ENCODE measurements at regions of chr10 and their contacts with region 1.

Region 1: GRCh38 chr10:132003282-132003924 is 21.7 kb upstream of the BNIP3 start:
- DNase-seq: no peak
- H3K4me3 ChIP-seq: no peak overlapping the region
- H3K27ac ChIP-seq: no peak overlapping the region
- H3K4me1 ChIP-seq: peaks cover 10% of the 10 kb centered on the region
- H3K27me3 ChIP-seq: no peaks in the 10 kb centered on the region
- CTCF ChIP-seq: no peak
- POLR2A ChIP-seq: no peak

Region 2: DNA sequence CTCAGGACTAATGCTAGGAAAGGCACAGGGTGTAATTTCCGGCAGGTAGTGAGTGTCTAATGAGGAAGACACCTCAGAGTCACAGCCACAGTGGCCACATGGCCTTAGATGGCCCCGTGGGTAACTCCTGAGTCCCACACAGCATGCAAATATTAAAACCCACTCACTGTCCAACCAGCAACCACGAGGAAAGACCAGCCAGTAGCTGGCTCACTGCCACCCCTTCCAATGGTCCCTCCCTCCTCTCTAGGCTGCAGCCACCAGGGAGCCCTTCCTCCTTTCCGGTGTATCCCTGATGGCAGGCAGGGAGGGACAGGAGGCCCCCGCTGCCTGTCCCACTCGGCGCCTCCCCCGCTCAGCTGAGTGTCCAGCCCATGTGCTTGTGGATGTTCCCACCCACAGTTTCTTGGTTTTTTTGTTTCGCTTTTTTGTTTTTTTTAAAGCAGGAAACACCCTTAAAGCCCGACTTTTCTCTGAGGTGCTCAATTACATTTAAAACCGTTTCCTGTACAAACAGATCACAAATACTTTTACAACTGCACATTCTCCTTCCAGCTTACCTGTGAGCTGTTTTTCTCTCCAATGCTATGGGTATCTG is 30.8 kb before region 1 on chr10:
- intact Hi-C with region 1: loop called (anchors 1 kb)
- DNase-seq: no peak
- H3K4me3 ChIP-seq: no peak overlapping the region
- H3K27ac ChIP-seq: no peak overlapping the region
- H3K4me1 ChIP-seq: peaks cover 12% of the 10 kb centered on the region
- H3K27me3 ChIP-seq: no peaks in the 10 kb centered on the region
- CTCF ChIP-seq: no peak
- POLR2A ChIP-seq: no peak